HepG2 (cell line): ENCODE measurements at regions of chr1 and their contacts with region 1.

Region 1: DNA sequence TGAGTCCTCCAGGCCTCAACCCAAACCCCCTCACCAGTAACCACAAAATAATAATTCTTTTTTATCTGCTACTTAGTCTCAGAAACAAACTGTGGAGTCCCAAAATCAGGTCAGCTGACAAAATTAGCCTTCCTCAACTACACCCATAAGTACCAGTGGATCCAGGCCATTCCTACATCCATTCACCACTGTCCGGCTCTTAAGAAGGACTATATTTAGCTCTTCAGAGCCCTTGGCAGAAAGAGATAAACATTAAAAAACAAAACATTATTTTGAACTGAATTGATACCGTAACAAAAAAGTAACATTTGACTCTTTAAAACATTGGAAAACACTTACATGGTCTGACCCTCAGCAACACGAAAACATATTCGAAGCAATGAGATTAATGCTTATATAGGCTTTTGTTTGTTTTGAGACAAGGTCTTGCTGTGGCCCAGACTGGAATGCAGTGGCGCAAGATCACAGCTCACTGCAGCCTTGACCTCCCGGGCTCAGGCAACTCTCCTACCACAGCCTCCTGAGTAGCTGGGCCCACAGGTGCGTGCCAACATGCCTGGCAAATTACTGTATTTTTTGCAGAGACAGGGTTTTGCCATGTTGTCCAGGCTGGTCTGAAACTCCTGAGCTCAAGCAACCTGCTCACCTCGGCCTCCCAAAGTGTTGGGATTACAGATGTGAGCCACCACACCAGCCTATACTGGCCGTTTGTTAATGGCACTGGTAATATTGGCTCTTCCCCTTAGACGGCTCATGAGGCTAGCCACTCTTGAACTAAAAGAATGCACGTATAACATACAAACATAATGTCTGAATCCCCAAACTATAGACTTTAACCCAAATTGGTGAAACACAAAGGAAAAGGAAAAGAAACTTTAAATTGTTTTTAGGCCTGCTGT is 330.7 kb downstream of the SMYD3 start:
- DNase-seq: peak; percentile 92
- ATAC-seq: peak; percentile 99
- H3K4me3 ChIP-seq: peak overlapping the region in 1 of 3 experiments; percentile 17; a peak in 1 of 6 replicates
- H3K27ac ChIP-seq: peak overlapping the region; percentile 53
- H3K4me1 ChIP-seq: peaks cover 50% of the 10 kb centered on the region
- H3K27me3 ChIP-seq: no peaks in the 10 kb centered on the region
- CTCF ChIP-seq: peak; percentile 30; the same call in 1 of the 2 replicates
- EP300 ChIP-seq: peak; percentile 75 to 88
- POLR2A ChIP-seq: no peak
- RAD21 ChIP-seq: peak; percentile 46; the same call in 1 of the 2 replicates

Region 2: DNA sequence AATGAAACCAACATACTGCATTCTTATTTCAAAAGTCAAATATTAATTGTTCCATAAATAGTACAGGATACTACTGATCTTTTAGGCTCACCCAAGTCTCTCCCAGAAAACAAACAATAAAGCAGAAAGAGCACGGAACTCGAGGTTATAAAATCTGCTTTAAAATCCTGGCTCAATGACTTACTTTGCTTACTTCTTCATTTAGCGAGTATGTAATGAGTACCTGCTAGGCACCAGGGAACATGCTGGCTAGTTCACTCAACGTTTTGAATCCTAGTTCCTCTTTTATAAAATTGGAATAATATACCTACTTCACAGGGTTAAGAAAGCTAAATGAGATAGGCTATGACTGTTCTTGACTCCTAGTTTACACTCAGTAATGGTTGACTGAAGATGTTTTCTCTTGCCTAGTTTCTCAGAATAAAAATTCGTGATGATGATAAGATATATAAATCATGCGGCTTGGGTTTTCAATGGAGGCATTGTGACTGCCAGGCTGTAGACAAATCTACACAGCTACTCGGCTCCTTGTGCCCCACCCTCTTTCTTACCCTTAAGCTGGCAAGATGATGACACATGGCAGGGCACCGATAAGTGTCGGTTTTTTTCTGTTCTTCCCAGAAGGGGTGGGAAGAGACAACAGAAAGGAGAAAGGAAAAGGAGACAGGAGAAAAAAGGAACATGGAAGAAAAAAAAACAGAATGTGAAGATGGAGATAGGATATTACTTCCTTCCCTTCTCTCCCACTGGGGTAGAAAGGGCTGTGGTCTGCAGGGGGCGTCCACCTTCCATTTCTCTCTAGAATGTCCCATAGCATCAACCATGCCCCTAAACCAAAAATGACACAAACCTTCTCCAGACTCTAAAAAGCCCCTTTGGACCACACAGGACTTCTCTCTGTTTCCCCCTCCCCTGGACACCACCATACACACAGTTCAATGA is 176.4 kb before region 1 on chr1:
- CTCF ChIA-PET with region 1: no interaction called
- POLR2A ChIA-PET with region 1: no interaction called
- in situ Hi-C with region 1: no loop called
- intact Hi-C with region 1: no loop called
- DNase-seq: no peak
- ATAC-seq: no peak
- H3K4me3 ChIP-seq: no peak overlapping the region
- H3K27ac ChIP-seq: no peak overlapping the region
- H3K4me1 ChIP-seq: no peaks in the 10 kb centered on the region
- H3K27me3 ChIP-seq: no peaks in the 10 kb centered on the region
- CTCF ChIP-seq: no peak
- EP300 ChIP-seq: no peak
- POLR2A ChIP-seq: no peak
- RAD21 ChIP-seq: no peak

Region 3: DNA sequence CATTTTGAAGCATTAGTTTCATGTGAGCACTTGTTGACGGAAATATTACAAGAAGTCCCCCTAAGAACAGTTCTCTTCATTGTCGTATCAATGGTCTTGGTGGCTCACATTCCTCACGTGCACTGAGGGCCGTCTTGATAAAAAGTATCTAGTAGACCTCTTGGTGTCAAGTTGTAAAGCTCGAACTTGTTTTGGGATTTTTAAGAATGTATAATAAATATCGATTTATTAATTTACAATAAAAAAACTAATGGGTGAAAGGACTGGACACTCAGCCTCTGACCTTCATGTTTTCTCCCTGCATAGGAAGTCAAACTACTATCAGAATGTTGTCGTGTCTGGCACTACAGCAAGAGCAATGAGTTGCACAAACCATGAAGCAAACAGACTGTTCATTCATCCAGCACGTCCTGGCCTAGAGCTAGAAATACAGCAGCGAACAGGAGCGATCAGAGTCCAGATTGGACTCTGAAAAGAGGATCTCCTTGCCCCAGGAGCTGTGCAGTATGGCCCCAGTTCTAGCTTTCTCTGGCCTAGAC is 11.5 kb after region 1 on chr1:
- CTCF ChIA-PET with region 1: no interaction called
- POLR2A ChIA-PET with region 1: interaction called, 10 read pairs
- in situ Hi-C with region 1: no loop called
- intact Hi-C with region 1: loop called (anchors 1 kb)
- DNase-seq: peak; percentile 95
- ATAC-seq: peak; percentile 100
- H3K4me3 ChIP-seq: no peak overlapping the region; a peak in 1 of 6 replicates
- H3K27ac ChIP-seq: peak overlapping the region; percentile 73
- H3K4me1 ChIP-seq: peaks cover 30% of the 10 kb centered on the region
- H3K27me3 ChIP-seq: no peaks in the 10 kb centered on the region
- CTCF ChIP-seq: no peak
- EP300 ChIP-seq: peak; percentile 23 to 70; a peak in 2 of 4 replicates
- POLR2A ChIP-seq: peak in 1 of 2 experiments; percentile 66; a peak in 2 of 4 replicates
- RAD21 ChIP-seq: no peak; the same call in 1 of the 2 replicates

Region 4: DNA sequence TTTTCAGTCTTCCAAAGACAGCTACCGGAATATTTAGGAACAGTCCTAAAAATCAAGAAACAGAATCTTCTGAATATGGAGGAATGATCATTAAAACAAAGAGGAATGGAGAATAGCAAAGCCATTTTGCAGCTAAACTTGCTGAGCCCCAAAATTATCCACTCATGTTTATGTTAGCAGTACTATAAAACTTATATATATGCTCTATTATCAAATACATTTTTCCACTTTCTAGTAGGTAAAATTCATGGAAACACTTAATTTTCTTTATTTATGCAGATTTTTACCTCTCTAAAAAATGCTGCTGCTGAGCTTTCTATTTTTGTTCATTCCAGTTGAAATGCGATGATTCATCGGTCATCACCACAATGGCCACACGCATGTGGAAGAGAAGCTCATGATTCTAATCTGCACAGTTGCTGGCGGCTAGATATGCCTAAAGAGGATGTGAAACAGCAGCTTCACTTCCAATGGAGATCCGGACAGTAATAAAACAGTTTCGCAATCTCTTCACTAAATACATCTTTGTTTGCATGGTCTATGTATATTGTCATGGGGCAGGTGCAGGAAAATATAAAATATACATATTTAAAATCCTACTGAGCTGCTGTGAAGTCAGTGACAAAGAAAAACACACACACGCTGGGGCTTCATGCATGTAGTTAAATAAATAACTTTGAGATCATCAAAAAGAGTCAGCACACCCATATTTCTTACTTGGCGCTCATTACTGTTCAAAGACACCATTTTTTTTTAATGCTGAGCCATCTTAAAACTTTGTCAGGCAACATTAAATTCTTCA is 38.5 kb after region 1 on chr1:
- CTCF ChIA-PET with region 1: no interaction called
- POLR2A ChIA-PET with region 1: no interaction called
- in situ Hi-C with region 1: no loop called
- intact Hi-C with region 1: loop called (anchors 5 kb)
- DNase-seq: no peak
- ATAC-seq: no peak
- H3K4me3 ChIP-seq: no peak overlapping the region
- H3K27ac ChIP-seq: no peak overlapping the region
- H3K4me1 ChIP-seq: peaks cover 25% of the 10 kb centered on the region
- H3K27me3 ChIP-seq: no peaks in the 10 kb centered on the region
- CTCF ChIP-seq: no peak
- EP300 ChIP-seq: no peak
- POLR2A ChIP-seq: no peak
- RAD21 ChIP-seq: no peak

Region 5: GRCh38 chr1:246317341-246318035 is 141.1 kb after region 1 on chr1:
- CTCF ChIA-PET with region 1: no interaction called
- POLR2A ChIA-PET with region 1: no interaction called
- in situ Hi-C with region 1: no loop called
- intact Hi-C with region 1: no loop called
- DNase-seq: no peak
- ATAC-seq: no peak
- H3K4me3 ChIP-seq: no peak overlapping the region
- H3K27ac ChIP-seq: no peak overlapping the region
- H3K4me1 ChIP-seq: no peaks in the 10 kb centered on the region
- H3K27me3 ChIP-seq: no peaks in the 10 kb centered on the region
- CTCF ChIP-seq: no peak
- EP300 ChIP-seq: no peak
- POLR2A ChIP-seq: no peak
- RAD21 ChIP-seq: no peak